ENCODE measurements at regions of chr9 and their contacts with region 1.

Region 1: DNA sequence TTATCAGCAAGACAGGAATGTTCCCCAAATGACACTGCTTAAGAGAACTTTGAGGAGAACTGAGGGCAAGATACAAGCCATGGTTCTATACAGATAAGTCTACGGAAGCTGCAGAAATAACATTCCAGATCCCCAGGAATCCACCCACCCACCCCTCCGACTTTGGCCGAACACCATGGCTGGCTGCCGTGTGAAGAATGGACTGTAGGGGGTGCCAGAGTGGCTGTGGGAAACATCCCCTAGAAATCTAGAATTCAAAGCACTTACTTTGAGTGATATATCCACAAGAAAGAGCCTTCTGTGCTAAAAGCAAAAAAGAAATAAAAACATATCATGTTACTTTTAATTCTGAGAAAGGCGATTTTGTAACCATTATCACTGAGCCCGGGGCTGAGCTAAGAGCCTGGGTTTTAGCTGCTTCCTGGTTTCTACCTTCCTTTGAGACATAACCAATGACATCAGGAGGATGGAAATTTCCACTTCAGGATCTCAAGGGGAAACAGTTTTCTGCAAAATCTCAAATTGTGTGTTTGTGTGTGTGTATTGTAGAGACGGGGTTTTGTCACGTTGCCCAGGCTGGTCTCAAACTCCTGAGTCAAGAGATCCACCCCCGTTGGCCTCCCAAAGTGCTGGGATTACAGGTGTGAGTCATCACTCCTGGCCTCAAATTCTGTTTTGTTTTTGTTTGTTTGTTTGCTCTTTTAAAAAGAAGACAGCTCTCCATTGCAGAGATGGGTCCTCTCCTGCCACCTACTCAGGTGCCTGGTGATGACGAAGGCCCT is 36.4 kb downstream of the GGTA1 start:
- DNase-seq: peak; percentile 55 to 77
- H3K4me3 ChIP-seq: no peak overlapping the region
- H3K27ac ChIP-seq: peak overlapping the region; percentile 12 to 39
- H3K4me1 ChIP-seq: peaks cover 0 to 15% (median 10%) of the 10 kb centered on the region in 4 donors
- H3K27me3 ChIP-seq: no peaks in the 10 kb centered on the region
- CTCF ChIP-seq: peak; percentile 74 to 86

Region 2: DNA sequence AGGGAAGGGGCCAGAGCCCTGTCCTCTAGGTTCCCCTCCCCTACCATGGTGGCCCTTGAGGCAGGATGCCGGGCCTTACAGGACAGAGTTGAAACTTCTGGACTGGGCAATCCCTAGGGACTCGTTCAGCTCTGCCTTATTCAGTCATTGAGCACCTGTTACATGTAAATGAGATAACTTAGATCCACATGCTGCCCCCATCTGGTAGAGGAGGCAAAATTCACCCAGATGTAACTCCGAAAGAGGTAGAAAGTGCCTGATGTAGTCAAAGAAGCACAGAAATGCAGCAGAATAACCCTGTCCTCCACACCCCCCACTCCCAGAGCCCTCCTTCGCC is 34.9 kb after region 1 on chr9:
- intact Hi-C with region 1: loop called (anchors 5 kb)
- DNase-seq: peak; percentile 83 to 86
- H3K4me3 ChIP-seq: peak overlapping the region; percentile 69 to 82
- H3K27ac ChIP-seq: peak overlapping the region; percentile 92 to 96
- H3K4me1 ChIP-seq: peaks cover 0 to 32% (median 24%) of the 10 kb centered on the region in 4 donors
- H3K27me3 ChIP-seq: no peaks in the 10 kb centered on the region
- CTCF ChIP-seq: peak; percentile 73 to 77

Region 3: GRCh38 chr9:121538246-121538645 is 75.0 kb after region 1 on chr9:
- intact Hi-C with region 1: loop called (anchors 10 kb)
- DNase-seq: no peak
- H3K4me3 ChIP-seq: no peak overlapping the region
- H3K27ac ChIP-seq: peak overlapping the region in 1 of 2 donors; percentile 53
- H3K4me1 ChIP-seq: peaks cover 0 to 19% (median 6%) of the 10 kb centered on the region in 4 donors
- H3K27me3 ChIP-seq: no peaks in the 10 kb centered on the region
- CTCF ChIP-seq: peak in 1 of 2 experiments; percentile 17

Region 4: DNA sequence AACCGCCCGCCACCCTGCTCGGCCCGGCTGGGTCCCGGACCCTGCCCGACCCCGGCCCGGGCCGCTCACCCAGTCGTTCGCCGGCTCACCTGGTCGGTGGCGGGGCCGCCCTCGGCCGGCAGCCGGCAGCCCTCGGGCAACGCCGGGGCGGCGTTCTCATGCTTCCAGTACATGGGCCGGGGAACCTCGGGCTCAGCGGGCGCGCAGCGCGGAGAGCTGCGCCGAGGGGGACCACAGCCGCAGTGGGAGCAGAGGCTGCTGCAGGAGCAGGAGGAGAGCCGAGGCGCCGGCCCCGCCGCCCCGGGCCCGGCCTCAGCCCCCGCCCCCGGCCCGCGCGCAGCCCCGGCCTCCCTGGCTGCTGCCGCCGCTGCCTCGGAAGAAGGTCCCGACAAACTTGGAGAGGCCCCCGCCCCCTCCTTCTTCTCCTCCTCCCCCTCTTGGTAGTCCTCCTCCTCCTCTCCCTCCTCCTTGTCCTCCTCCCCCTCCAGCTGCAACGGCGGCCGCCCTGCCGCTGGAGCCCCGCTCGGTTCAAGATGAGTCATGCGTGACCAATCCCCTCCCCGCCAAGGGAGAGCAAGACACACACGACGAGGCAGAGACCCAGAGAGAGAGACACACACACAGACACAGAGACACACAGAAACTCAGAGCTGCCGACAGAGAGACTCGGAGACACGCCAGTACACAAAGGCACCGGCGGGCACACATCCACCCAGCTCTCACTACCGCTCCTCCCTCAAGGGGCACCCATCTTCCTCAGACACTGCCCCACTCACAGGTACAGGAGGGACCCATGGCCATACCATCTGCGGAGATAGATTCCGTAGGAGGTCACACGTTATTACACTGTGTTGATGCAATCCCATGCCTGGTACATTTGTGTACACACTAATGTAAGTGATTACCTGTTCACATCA is 765.6 kb after region 1 on chr9 and contains the start of gene LHX6:
- intact Hi-C with region 1: no loop called
- DNase-seq: no peak
- H3K4me3 ChIP-seq: peak within 1 kb of the TSS; percentile 34 to 46
- H3K27ac ChIP-seq: no peak within 1 kb of the TSS
- H3K4me1 ChIP-seq: peaks cover 0 to 37% (median 28%) of the 10 kb centered on the region in 4 donors
- H3K27me3 ChIP-seq: peaks cover 0 to 80% of the 10 kb centered on the region in 2 donors
- CTCF ChIP-seq: no peak

Measured in tibial artery (tissue), 4 donors.